PC-3 (cell line): ENCODE measurements at regions of chr10 and their contacts with region 1.

Region 1: DNA sequence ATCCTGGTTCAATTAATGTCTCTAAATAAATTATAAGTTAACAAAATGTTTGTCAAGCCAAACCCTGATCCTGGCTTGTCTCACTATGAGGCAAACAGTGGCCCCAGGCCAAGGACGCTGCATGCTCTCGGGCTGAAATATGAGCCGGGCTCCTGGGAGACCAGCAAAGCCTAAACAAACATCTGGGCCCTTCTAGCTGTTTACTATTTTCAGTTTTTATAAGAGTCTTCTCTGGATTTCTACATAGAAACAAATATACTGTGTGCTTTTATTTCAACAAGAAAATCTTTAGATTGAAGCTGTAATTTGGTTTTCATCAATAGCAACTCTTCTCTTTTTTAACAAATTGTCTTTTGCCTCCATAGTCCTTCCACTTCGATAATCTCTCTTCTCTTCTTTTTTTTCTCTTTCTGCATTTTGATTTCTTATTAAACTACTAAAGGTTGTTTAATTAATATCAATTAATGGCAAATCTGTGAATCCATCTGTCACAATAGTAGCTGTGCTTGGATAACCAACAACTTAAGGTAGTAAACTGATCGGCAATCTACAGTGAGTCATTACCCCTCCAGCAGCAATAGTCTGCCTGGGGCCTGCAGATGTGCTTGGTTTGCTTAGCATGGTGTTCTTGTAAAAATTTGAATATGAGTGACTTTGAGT is 83.3 kb upstream of the DNAJC1 start:
- DNase-seq: peak; percentile 83
- ATAC-seq: peak; percentile 98
- H3K4me3 ChIP-seq: peak overlapping the region; percentile 55; the same call in 1 of the 2 replicates
- H3K27ac ChIP-seq: peak overlapping the region; percentile 68
- H3K4me1 ChIP-seq: peaks cover 19% of the 10 kb centered on the region
- H3K27me3 ChIP-seq: no peaks in the 10 kb centered on the region
- CTCF ChIP-seq: no peak

Region 2: DNA sequence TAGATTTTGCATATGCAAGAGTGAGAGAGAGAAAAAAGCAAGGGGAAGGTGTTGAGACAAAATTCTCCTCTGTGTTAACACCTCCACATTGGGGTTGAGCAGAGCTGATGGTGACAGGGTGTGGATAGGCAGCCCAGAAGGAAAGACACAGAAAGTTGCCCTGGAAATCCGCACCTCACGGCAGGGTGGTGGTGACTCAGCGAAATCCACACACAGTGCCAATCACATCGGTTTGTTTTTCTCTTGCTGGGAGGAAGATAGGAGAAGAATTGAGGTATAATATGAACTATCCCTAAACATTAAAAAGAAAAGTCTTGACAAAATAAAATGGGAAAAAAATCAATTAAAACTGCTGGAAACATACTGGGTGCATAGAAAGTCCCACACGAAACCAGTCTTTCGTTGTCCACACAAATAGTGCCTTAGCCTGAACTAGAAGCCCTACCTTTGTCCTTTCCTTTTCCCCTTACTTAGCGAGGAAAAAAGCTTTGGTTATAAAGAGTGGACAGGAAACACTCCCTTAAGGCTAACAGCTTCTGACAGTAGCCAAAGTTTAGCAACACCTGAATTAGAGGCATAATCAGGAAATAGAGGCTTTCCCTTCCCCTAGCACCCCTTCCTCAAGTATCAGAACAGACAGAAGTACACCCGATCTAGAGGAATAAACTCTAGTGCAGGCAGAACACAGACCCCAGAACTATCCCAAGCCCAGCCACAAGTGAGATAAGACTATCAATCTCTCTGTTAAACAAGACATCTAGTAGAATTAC is 44.1 kb before region 1 on chr10:
- CTCF ChIA-PET with region 1: no interaction called
- POLR2A ChIA-PET with region 1: no interaction called
- intact Hi-C with region 1: no loop called
- DNase-seq: no peak
- ATAC-seq: no peak
- H3K4me3 ChIP-seq: no peak overlapping the region
- H3K27ac ChIP-seq: no peak overlapping the region
- H3K4me1 ChIP-seq: no peaks in the 10 kb centered on the region
- H3K27me3 ChIP-seq: no peaks in the 10 kb centered on the region
- CTCF ChIP-seq: no peak

Region 3: GRCh38 chr10:22244001-22244400 is 157.1 kb after region 1 on chr10:
- CTCF ChIA-PET with region 1: no interaction called
- POLR2A ChIA-PET with region 1: no interaction called
- intact Hi-C with region 1: loop called (anchors 5 kb)
- DNase-seq: no peak
- ATAC-seq: no peak
- H3K4me3 ChIP-seq: peak overlapping the region; percentile 25; the same call in 1 of the 2 replicates
- H3K27ac ChIP-seq: peak overlapping the region; percentile 99
- H3K4me1 ChIP-seq: peaks cover 61% of the 10 kb centered on the region
- H3K27me3 ChIP-seq: no peaks in the 10 kb centered on the region
- CTCF ChIP-seq: peak; percentile 49